ENCODE measurements at regions of chr9 and their contacts with region 1.

Region 1: GRCh38 chr9:125374443-125375309 is 113.0 kb downstream of the GAPVD1 start:
- DNase-seq: peak; percentile 66
- H3K4me3 ChIP-seq: no peak overlapping the region
- H3K27ac ChIP-seq: no peak overlapping the region
- H3K4me1 ChIP-seq: no peaks in the 10 kb centered on the region
- H3K27me3 ChIP-seq: peaks cover 0 to 4% of the 10 kb centered on the region in 2 experiments
- CTCF ChIP-seq: peak; percentile 69 to 76
- POLR2A ChIP-seq: no peak

Region 2: DNA sequence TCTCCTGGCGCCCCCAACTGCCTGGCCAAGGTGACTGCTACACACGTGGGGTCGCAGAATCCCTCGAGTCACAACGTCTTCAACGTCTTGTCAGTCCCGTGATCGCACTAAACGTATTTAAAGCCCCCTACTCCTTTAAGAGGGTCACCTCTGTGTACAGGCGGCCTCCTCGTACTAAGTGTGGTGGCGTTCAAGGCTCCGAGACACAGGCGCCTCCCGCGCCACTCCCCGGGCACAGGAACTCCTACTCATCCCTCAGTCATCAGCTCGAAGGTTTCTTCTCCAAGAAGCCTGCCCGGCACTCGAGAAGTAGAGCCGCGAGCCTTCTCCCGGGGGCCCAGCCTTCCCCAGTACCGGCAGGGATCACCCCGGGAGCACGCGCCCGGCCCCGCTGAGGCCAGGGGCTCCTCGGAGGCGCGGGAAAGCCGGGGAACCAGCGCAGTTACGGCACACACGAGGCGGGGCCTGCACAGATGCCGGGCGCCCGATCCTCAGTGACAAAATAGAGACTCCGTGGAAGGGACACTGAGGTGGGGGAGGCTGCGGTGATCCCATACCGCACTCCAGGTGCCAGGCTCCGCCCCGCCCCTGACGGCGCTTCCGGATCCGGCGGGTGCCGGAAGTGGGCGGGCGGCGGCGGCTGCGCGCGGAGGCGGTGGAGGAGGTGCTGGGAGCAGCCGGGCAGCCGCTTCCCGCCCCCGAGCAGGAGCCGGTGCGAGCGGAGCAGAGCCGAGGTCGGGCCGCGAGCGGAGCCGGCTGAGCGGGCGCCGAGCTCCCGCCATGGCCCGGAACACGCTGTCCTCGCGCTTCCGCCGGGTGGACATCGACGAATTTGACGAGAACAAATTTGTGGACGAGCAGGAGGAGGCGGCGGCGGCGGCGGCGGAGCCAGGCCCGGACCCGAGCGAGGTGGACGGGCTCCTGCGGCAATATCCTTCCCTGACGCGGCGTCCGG is 505.9 kb before region 1 on chr9:
- CTCF ChIA-PET with region 1: no interaction called
- POLR2A ChIA-PET with region 1: no interaction called
- dilution Hi-C with region 1: no loop called
- intact Hi-C with region 1: loop called (anchors 1 kb)
- DNase-seq: peak; percentile 82
- H3K4me3 ChIP-seq: peak overlapping the region; percentile 31 to 97 (median 79)
- H3K27ac ChIP-seq: peak overlapping the region; percentile 75
- H3K4me1 ChIP-seq: peaks cover 35% of the 10 kb centered on the region
- H3K27me3 ChIP-seq: no peaks in the 10 kb centered on the region
- CTCF ChIP-seq: no peak
- POLR2A ChIP-seq: peak; percentile 92

Region 3: GRCh38 chr9:125143375-125144090 is 231.1 kb before region 1 on chr9 and contains the start of gene SCAI:
- CTCF ChIA-PET with region 1: interaction called, 4 read pairs
- POLR2A ChIA-PET with region 1: no interaction called
- dilution Hi-C with region 1: no loop called
- intact Hi-C with region 1: loop called (anchors 2 kb)
- DNase-seq: peak; percentile 99
- H3K4me3 ChIP-seq: peak within 1 kb of the TSS; percentile 19 to 74 (median 59)
- H3K27ac ChIP-seq: no peak within 1 kb of the TSS
- H3K4me1 ChIP-seq: peaks cover 6% of the 10 kb centered on the region
- H3K27me3 ChIP-seq: no peaks in the 10 kb centered on the region
- CTCF ChIP-seq: peak; percentile 94 to 99
- POLR2A ChIP-seq: peak; percentile 71
- total RNA-seq, gene SCAI: 6.9 and 9.3 TPM in 2 replicates

Region 4: DNA sequence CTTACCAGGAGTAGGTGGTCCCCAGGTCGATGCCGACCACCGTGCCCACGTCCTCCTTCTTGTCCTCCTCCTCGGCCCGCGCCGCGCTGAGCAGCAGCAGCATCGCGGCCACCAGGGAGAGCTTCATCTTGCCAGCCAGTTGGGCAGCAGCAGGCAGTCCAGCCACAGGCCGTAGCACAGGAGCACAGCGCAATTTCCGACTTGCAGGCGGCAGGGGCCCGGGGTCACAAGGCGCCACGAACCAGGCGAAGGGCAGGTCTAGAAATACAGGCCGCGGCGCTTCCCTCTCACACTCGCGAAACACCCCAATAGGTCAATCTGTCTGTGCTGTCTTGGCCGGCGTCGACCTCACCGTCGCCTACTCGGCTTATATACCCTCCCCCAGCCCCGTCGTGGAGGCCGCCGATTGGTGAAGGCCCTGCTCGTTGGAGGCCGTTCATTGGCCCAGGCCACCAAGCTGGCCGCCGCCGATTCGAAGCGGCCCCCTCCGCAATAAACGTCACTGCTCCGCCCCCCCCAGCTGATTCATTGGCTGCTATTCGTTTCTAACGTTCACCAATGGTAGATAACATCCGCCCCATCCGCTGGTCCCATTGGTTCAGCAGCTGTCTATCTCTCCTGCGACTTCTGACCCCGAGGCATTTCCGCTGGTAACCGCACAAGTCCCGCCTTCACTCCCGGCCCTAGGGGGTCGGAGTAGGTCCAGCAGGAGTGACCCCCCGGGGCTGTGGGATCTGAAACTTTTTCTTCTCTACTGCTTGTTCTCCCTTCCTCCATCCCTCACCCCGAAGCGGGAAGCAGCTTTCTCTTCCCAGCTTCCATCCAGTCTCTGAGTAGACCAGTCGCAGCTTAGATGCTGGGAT is 133.4 kb before region 1 on chr9 and contains the start of gene HSPA5:
- CTCF ChIA-PET with region 1: no interaction called
- POLR2A ChIA-PET with region 1: no interaction called
- dilution Hi-C with region 1: no loop called
- intact Hi-C with region 1: loop called (anchors 5 kb)
- DNase-seq: peak; percentile 100
- H3K4me3 ChIP-seq: peak within 1 kb of the TSS; percentile 77 to 97 (median 96)
- H3K27ac ChIP-seq: peak within 1 kb of the TSS; percentile 89
- H3K4me1 ChIP-seq: peaks cover 43% of the 10 kb centered on the region
- H3K27me3 ChIP-seq: no peaks in the 10 kb centered on the region
- CTCF ChIP-seq: peak in 1 of 2 donors; percentile 22
- POLR2A ChIP-seq: peak; percentile 100
- total RNA-seq, gene HSPA5: 514 and 538 TPM in 2 replicates

Region 5: DNA sequence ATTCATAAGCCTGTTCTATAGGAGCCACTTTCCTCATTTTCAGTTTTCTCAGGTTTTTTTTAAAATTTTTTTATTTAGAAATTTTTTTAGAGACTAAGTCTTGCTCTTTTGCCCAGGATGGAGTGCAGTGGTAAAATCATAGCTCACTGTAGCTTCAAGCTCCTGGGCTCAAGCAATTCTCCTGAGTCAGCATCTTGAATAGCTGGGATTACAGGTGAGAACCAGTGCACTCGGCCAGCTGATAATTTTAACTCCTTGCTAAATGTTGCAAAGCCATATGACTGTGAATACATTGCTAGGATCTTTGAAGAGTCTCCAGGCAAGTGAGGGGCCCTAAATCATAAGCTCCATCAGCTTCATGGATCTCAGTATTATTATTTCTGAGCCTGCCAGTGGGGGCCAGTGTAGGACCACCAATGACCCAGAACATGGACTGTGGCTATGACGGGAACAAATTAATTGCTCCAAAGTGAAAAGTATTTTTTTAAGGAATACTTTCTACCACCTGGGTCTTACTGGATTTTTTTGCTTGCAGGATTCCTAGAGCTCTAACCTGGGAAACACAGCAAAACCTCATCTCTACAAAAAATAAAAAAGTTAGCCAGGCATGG is 118.8 kb before region 1 on chr9:
- CTCF ChIA-PET with region 1: interaction called, 12 read pairs
- POLR2A ChIA-PET with region 1: no interaction called
- dilution Hi-C with region 1: no loop called
- intact Hi-C with region 1: loop called (anchors 1 kb)
- DNase-seq: no peak
- H3K4me3 ChIP-seq: no peak overlapping the region
- H3K27ac ChIP-seq: no peak overlapping the region
- H3K4me1 ChIP-seq: no peaks in the 10 kb centered on the region
- H3K27me3 ChIP-seq: no peaks in the 10 kb centered on the region
- CTCF ChIP-seq: peak; percentile 20 to 47
- POLR2A ChIP-seq: no peak

Region 6: DNA sequence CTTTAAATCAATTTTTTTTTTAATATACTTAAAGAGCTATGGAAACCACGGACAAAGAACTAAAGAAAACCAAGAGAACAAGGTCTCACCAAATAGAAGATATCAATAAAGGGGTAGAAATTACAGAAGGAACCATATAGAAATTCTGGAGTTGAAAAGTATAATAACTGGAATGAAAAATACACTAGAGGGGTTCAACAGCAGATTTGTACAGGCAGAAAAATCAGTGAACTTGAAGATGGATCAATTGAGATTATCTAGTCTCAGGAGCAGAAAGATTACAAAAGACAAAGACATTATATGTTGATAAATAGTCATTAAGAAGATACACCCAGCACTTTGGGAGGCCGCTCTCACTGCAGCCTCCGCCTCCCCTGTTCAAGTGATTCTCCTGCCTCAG is 57.0 kb before region 1 on chr9:
- CTCF ChIA-PET with region 1: no interaction called
- POLR2A ChIA-PET with region 1: no interaction called
- dilution Hi-C with region 1: no loop called
- intact Hi-C with region 1: no loop called
- DNase-seq: no peak
- H3K4me3 ChIP-seq: no peak overlapping the region
- H3K27ac ChIP-seq: no peak overlapping the region
- H3K4me1 ChIP-seq: no peaks in the 10 kb centered on the region
- H3K27me3 ChIP-seq: no peaks in the 10 kb centered on the region
- CTCF ChIP-seq: no peak
- POLR2A ChIP-seq: no peak

Measured in endothelial cell of umbilical vein (primary cell).